ENCODE measurements at regions of chr5 and their contacts with region 1.

Region 1: DNA sequence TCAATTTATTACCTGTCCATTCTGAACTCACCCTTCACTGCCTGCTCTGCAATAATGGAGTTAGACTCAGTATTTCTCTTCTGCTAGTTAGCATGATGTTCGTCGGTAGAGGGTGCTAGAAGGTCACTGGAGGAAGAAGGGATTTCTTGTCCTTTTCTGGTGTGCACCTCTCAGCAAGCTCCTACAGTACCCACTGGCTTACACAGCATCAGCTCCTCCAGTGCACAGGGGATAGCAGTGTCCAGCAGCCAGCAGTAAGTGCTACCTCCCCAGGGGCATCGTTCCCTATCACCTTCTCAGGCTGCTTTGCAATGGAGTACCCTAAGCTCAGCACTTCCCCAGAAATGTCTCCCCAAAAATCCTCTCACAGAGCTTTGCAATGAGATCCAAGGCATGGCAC is 45.9 kb upstream of the APC start:
- DNase-seq: peak; percentile 3 to 55
- H3K4me3 ChIP-seq: no peak overlapping the region
- H3K27ac ChIP-seq: no peak overlapping the region
- H3K4me1 ChIP-seq: peaks cover 0 to 4% (median 0%) of the 10 kb centered on the region in 4 experiments; a peak in 2 of 7 replicates
- H3K27me3 ChIP-seq: no peaks in the 10 kb centered on the region; a peak in 1 of 7 replicates
- CTCF ChIP-seq: peak in 2 of 3 experiments; percentile 61 to 77; a peak in 2 of 4 replicates
- EP300 ChIP-seq: no peak
- POLR2A ChIP-seq: no peak
- RAD21 ChIP-seq: peak; percentile 84 to 90

Region 2: DNA sequence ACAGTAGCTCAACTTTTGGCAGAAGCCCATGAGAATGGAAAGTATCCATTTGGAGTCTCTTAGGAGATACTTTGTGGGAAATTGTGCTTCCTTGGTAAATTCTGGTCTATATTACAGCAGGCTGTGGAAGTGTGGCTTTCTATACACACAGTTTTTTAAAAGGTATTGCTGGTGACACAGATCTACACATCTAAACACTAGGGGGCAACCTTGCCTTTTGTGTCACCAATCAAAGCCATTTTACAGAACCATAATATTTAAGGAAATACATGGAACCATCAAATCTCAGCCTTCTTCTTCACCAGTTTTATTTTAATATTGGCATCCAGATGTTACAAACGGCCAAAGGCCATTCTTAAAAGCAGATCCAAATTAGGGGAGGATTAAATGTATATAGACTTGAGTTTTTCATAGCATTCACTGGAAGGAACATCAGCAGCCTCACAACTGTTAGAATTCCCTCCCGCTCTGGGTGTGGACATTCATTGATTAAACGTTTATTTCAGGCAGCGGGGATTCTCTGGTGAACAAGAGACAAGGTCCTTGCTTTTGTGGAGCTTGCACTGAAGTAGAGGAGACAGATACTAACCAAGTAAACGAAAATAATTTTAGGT is 140.2 kb before region 1 on chr5:
- CTCF ChIA-PET with region 1: interaction called, 61 read pairs
- POLR2A ChIA-PET with region 1: no interaction called
- DNase-seq: no peak
- H3K4me3 ChIP-seq: no peak overlapping the region
- H3K27ac ChIP-seq: no peak overlapping the region
- H3K4me1 ChIP-seq: no peaks in the 10 kb centered on the region
- H3K27me3 ChIP-seq: no peaks in the 10 kb centered on the region
- CTCF ChIP-seq: peak in 2 of 3 experiments; percentile 61 to 63; a peak in 2 of 4 replicates
- EP300 ChIP-seq: no peak
- POLR2A ChIP-seq: no peak
- RAD21 ChIP-seq: peak; percentile 86 to 87

Region 3: DNA sequence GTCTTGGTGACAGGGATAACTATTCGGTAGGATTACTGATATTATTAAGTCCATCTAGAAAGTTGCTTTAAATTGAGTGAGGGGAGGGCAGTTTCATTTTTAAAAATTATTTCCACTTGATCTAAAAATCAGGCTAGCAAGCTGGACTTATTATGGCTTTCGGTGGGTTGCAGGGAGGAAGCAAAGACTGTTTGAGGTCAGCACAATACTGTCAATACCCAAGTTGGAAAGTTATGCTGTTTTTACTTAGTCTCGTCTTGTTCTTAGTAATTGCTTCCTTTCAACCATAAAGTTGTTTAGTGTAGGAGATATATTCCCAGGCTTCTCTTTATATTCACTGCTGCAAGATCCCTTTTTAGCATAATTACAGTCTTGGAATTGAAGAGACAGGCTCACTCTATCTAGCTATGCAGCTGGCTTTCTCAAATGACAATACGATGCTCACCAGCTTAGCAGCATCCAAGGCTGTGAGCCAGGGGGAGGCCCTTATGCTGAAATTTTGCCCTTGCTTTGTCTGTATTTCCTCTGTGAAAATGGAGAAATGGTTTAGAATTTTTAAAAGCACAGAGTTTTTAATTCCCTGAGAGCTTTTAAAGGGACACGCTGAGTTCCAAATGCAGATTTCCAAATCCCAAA is 22.3 kb before region 1 on chr5:
- CTCF ChIA-PET with region 1: interaction called, 21 read pairs
- POLR2A ChIA-PET with region 1: no interaction called
- DNase-seq: no peak
- H3K4me3 ChIP-seq: no peak overlapping the region
- H3K27ac ChIP-seq: no peak overlapping the region
- H3K4me1 ChIP-seq: no peaks in the 10 kb centered on the region
- H3K27me3 ChIP-seq: no peaks in the 10 kb centered on the region
- CTCF ChIP-seq: no peak
- EP300 ChIP-seq: no peak
- POLR2A ChIP-seq: no peak
- RAD21 ChIP-seq: no peak

Region 4: DNA sequence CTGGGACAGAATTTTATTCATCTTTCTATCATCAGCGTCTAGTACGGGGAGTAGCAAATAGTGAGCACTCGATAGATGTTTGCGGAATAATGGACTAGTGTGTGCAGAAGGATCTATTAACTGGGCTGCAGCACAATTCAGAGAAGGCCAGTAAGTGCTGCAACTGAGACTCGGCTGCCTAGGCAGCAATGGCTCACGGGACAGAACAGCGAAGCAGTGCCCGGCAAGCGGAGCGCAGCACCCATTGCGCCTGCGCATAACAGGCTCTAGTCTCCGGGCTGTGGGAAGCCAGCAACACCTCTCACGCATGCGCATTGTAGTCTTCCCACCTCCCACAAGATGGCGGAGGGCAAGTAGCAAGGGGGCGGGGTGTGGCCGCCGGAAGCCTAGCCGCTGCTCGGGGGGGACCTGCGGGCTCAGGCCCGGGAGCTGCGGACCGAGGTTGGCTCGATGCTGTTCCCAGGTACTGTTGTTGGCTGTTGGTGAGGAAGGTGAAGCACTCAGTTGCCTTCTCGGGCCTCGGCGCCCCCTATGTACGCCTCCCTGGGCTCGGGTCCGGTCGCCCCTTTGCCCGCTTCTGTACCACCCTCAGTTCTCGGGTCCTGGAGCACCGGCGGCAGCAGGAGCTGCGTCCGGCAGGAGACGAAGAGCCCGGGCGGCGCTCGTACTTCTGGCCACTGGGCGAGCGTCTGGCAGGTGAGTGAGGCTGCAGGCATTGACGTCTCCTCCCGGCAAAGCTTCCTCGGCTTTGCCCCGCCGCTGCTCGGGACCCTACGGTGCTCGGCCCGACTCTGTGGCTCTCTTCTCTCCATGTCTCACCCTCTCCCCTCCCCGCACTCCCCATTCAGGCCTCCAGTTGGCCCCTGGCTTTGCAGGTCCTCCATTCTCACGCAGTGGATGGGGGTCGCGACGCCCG is 15.7 kb after region 1 on chr5:
- CTCF ChIA-PET with region 1: interaction called, 29 read pairs
- POLR2A ChIA-PET with region 1: interaction called, 8 read pairs
- DNase-seq: peak; percentile 92 to 97
- H3K4me3 ChIP-seq: peak overlapping the region; percentile 81 to 90 (median 84)
- H3K27ac ChIP-seq: peak overlapping the region; percentile 88
- H3K4me1 ChIP-seq: peaks cover 0 to 3% (median 0%) of the 10 kb centered on the region in 4 experiments; a peak in 2 of 7 replicates
- H3K27me3 ChIP-seq: no peaks in the 10 kb centered on the region
- CTCF ChIP-seq: no peak
- EP300 ChIP-seq: no peak
- POLR2A ChIP-seq: peak; percentile 88 to 99
- RAD21 ChIP-seq: no peak

Region 5: GRCh38 chr5:112752335-112752734 is 60.6 kb after region 1 on chr5:
- CTCF ChIA-PET with region 1: interaction called, 111 read pairs
- POLR2A ChIA-PET with region 1: no interaction called
- DNase-seq: no peak
- H3K4me3 ChIP-seq: no peak overlapping the region
- H3K27ac ChIP-seq: no peak overlapping the region
- H3K4me1 ChIP-seq: no peaks in the 10 kb centered on the region; a peak in 1 of 7 replicates
- H3K27me3 ChIP-seq: no peaks in the 10 kb centered on the region
- CTCF ChIP-seq: no peak
- EP300 ChIP-seq: no peak
- POLR2A ChIP-seq: no peak
- RAD21 ChIP-seq: no peak

Region 6: GRCh38 chr5:112757468-112758208 is 65.9 kb after region 1 on chr5:
- CTCF ChIA-PET with region 1: interaction called, 111 read pairs
- POLR2A ChIA-PET with region 1: no interaction called
- DNase-seq: no peak
- H3K4me3 ChIP-seq: no peak overlapping the region
- H3K27ac ChIP-seq: no peak overlapping the region
- H3K4me1 ChIP-seq: no peaks in the 10 kb centered on the region
- H3K27me3 ChIP-seq: no peaks in the 10 kb centered on the region
- CTCF ChIP-seq: peak in 2 of 3 experiments; percentile 48 to 63; a peak in 2 of 4 replicates
- EP300 ChIP-seq: no peak
- POLR2A ChIP-seq: no peak
- RAD21 ChIP-seq: peak; percentile 81 to 83

Region 7: DNA sequence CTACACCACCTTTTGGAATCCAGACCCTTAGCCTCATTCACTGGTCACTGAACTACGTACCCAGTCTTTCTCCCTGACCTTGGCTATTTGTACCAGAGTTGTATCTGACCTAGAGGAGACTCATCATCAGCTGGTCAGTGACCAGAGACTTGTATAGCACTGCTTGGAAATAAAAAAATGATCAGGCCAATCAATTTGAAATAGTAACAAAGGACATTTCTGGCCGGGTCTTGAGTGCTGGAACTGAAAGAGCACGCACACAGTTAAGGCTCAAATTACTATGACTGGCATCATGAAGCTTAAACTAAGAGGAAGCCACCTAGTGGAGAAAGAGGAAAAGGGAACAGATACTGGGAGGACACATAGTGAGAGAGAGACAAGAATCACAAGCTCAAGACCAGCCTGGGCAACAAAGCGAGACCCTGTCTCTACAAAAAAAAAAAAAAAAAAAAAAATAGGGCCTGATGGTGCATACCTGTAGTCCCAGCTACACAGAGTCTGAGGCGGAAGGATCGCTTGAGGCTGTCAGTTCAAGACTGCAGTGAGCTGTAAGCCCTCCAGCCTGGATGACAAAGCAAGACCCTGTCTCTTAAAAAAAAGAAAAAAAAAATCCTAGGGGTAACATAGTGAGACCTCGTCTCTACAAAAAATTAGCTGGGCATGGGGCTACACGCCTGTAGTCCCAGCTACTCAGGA is 156.5 kb after region 1 on chr5:
- CTCF ChIA-PET with region 1: interaction called, 13 read pairs
- POLR2A ChIA-PET with region 1: no interaction called
- DNase-seq: no peak
- H3K4me3 ChIP-seq: peak overlapping the region in 1 of 4 experiments; percentile 34; a peak in 1 of 8 replicates
- H3K27ac ChIP-seq: no peak overlapping the region
- H3K4me1 ChIP-seq: peaks cover 0 to 9% (median 0%) of the 10 kb centered on the region in 4 experiments; a peak in 2 of 7 replicates
- H3K27me3 ChIP-seq: no peaks in the 10 kb centered on the region; a peak in 1 of 7 replicates
- CTCF ChIP-seq: peak in 2 of 3 experiments; percentile 49 to 73; a peak in 3 of 4 replicates
- EP300 ChIP-seq: no peak
- POLR2A ChIP-seq: no peak
- RAD21 ChIP-seq: peak; percentile 47 to 53

Measured in H1 (cell line).